ENCODE measurements at regions of chr14 and their contacts with region 1.

Region 1: GRCh38 chr14:89767861-89768268 is 186.7 kb downstream of the EFCAB11 start:
- DNase-seq: peak; percentile 42 to 87
- ATAC-seq: peak; percentile 87 to 99 (median 99)
- H3K4me3 ChIP-seq: no peak overlapping the region
- H3K4me3 Mint-ChIP-seq: peak overlapping the region; percentile 26
- H3K27ac ChIP-seq: no peak overlapping the region
- H3K27ac Mint-ChIP-seq: peak overlapping the region; percentile 42 to 77
- H3K4me1 ChIP-seq: peaks cover 18% of the 10 kb centered on the region
- H3K4me1 Mint-ChIP-seq: peaks cover 22 to 33% of the 10 kb centered on the region in 2 donors
- H3K27me3 ChIP-seq: no peaks in the 10 kb centered on the region
- H3K27me3 Mint-ChIP-seq: no peaks in the 10 kb centered on the region
- CTCF ChIP-seq: peak; percentile 81

Region 2: GRCh38 chr14:89178802-89179535 is 588.9 kb before region 1 on chr14:
- intact Hi-C with region 1: loop called (anchors 1 kb)
- DNase-seq: no peak
- ATAC-seq: no peak
- H3K4me3 ChIP-seq: no peak overlapping the region
- H3K4me3 Mint-ChIP-seq: no peak overlapping the region
- H3K27ac ChIP-seq: no peak overlapping the region
- H3K27ac Mint-ChIP-seq: peak overlapping the region; percentile 34 to 69
- H3K4me1 ChIP-seq: peaks cover 6% of the 10 kb centered on the region
- H3K4me1 Mint-ChIP-seq: peaks cover 41 to 47% of the 10 kb centered on the region in 2 donors
- H3K27me3 ChIP-seq: no peaks in the 10 kb centered on the region
- H3K27me3 Mint-ChIP-seq: no peaks in the 10 kb centered on the region
- CTCF ChIP-seq: no peak

Measured in natural killer cell (primary cell).